Activated T-helper 1 cell treated with anti-CD3 and anti-CD28 coated beads, Interleukin-12 subunit alpha, Interleukin-12 subunit beta, Interleukin-2, Interleukin-4 antibody, amounts not matched to agents 30 ng/mL and 10 ng/mL and 1 ng/mL, durations not matched to agents 14 hours and 24 hours and 36 hours (primary cell): ENCODE measurements at regions of chr10 and their contacts with region 1.

Region 1: DNA sequence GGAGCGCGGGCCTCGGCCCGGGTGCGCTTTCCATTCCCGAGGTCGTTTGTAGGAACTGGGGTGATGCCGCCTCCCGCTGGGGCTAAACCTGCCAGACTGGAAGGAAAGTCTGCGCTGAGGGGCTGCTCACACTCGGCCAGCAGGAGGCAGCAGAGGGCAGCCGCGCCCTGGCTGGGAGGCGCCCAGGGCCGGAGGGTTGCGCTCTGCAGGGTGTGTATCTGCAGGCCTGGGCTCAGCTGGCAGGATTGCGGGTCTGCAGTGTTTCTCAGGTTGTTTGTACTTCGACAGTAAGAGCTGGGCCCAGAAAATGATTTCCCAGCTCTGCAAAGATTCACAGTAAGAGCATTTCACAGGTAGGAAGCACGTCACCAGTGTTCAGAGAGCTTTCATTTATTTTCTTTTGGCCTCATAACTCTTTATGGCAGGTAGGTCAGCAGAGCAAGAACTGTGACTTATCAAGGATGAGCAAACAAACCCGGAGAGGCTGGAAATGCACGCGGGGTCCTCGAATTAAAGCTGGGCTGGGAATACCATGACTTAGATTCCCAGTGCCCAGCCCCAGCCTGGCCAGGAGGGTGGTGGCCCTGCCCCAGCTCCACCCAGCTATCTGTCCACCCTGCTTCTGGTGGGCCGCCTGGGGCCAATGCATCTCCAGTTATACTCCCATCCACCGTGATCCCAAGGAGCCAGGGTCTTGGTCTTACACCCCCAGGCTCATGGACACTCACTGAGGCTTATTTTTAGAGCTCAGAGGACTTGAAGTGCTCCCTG is 15.2 kb upstream of the PPP2R2D start:
- DNase-seq: peak; percentile 73
- H3K4me3 Mint-ChIP-seq: no peak overlapping the region
- H3K27ac Mint-ChIP-seq: no peak overlapping the region
- H3K4me1 Mint-ChIP-seq: no peaks in the 10 kb centered on the region
- H3K27me3 Mint-ChIP-seq: peaks cover 7% of the 10 kb centered on the region

Region 2: DNA sequence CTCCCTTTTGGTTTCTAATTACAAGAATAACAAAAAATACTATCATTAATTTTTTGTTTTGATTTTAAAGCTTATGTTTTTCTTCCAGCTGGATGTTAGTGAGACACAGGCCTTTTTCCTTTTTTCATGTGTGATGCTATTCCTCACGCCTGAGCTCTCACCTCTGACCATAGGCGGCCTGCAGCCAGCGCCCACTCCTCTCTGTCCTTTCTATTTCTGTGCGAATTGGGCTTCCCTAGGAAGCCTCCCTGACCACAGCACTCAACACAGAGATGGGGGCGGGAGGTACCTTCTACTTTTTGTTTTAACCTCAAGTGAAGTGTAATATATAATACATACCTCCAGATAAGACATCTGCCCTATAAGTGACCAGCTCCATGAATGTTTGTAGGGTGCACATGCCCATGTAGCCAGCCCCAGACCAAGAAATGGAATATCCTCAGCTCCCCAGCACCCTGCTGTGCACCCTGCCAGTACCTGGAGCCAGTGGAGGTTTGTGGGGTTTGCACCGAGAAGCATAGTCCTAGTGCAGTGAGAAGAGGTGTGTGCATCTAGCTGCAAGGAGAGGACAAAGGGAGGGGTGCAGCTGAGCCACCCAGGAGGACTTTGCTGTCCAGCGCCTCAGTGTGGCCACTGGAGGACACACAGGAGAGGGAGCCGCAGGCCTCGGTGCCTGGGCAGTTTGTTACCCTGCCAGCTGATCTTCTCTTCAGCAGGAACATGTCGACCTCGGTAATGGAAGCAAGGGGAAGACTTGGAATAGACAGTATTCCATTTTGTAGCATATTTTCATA is 57.6 kb after region 1 on chr10:
- intact Hi-C with region 1: loop called (anchors 1 kb)
- DNase-seq: no peak
- H3K4me3 Mint-ChIP-seq: no peak overlapping the region
- H3K27ac Mint-ChIP-seq: no peak overlapping the region
- H3K4me1 Mint-ChIP-seq: peaks cover 6% of the 10 kb centered on the region
- H3K27me3 Mint-ChIP-seq: no peaks in the 10 kb centered on the region

Region 3: GRCh38 chr10:132023092-132023811 is 137.7 kb after region 1 on chr10:
- intact Hi-C with region 1: loop called (anchors 1 kb)
- DNase-seq: peak; percentile 59
- H3K4me3 Mint-ChIP-seq: no peak overlapping the region
- H3K27ac Mint-ChIP-seq: no peak overlapping the region
- H3K4me1 Mint-ChIP-seq: peaks cover 6% of the 10 kb centered on the region
- H3K27me3 Mint-ChIP-seq: peaks cover 34% of the 10 kb centered on the region

Region 4: GRCh38 chr10:132142411-132143161 is 257.0 kb after region 1 on chr10:
- intact Hi-C with region 1: loop called (anchors 1 kb)
- DNase-seq: peak; percentile 27
- H3K4me3 Mint-ChIP-seq: no peak overlapping the region
- H3K27ac Mint-ChIP-seq: no peak overlapping the region
- H3K4me1 Mint-ChIP-seq: no peaks in the 10 kb centered on the region
- H3K27me3 Mint-ChIP-seq: no peaks in the 10 kb centered on the region